ENCODE measurements at regions of chrX and their contacts with region 1.

Region 1: GRCh38 chrX:23756157-23756559 is 13.1 kb upstream of the ACOT9 start:
- DNase-seq: peak; percentile 55
- H3K4me3 Mint-ChIP-seq: no peak overlapping the region
- H3K27ac Mint-ChIP-seq: no peak overlapping the region
- H3K4me1 Mint-ChIP-seq: peaks cover 5% of the 10 kb centered on the region
- H3K27me3 Mint-ChIP-seq: no peaks in the 10 kb centered on the region

Region 2: DNA sequence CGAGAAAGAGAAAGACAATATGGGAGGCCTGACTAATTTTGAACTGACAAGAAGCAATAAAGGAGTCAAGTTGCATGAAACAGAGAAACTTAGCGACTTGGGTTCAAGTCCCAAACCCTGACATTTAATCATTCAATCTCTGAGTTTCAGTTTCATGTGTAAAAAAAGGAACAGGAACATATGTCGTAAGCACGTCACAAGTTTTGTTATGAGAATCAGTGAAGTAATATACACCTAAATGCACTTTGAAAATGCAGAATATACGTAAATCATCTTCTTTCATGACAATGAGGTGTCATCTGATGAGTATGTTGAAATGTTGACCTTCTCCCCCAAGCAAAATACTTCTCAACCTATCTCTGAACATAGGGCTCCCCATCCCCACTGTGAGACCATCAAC is 23.5 kb before region 1 on chrX:
- intact Hi-C with region 1: loop called (anchors 1 kb)
- DNase-seq: no peak
- H3K4me3 Mint-ChIP-seq: peak overlapping the region; percentile 57
- H3K27ac Mint-ChIP-seq: peak overlapping the region; percentile 79
- H3K4me1 Mint-ChIP-seq: peaks cover 27% of the 10 kb centered on the region
- H3K27me3 Mint-ChIP-seq: no peaks in the 10 kb centered on the region

Region 3: GRCh38 chrX:23844502-23845138 is 88.5 kb after region 1 on chrX:
- intact Hi-C with region 1: no loop called
- DNase-seq: no peak
- H3K4me3 Mint-ChIP-seq: no peak overlapping the region
- H3K27ac Mint-ChIP-seq: no peak overlapping the region
- H3K4me1 Mint-ChIP-seq: no peaks in the 10 kb centered on the region
- H3K27me3 Mint-ChIP-seq: no peaks in the 10 kb centered on the region

Region 4: GRCh38 chrX:23901805-23902204 is 145.6 kb after region 1 on chrX:
- intact Hi-C with region 1: loop called (anchors 1 kb)
- DNase-seq: peak; percentile 22
- H3K4me3 Mint-ChIP-seq: no peak overlapping the region
- H3K27ac Mint-ChIP-seq: no peak overlapping the region
- H3K4me1 Mint-ChIP-seq: peaks cover 14% of the 10 kb centered on the region
- H3K27me3 Mint-ChIP-seq: no peaks in the 10 kb centered on the region